Dendritic cell treated with granulocyte-macrophage colony-stimulating factor and Interleukin-4, amounts not matched to agents 40 ng/mL and 50 ng/mL, for 4 days (primary cell): ENCODE measurements at regions of chr4 and their contacts with region 1.

Region 1: DNA sequence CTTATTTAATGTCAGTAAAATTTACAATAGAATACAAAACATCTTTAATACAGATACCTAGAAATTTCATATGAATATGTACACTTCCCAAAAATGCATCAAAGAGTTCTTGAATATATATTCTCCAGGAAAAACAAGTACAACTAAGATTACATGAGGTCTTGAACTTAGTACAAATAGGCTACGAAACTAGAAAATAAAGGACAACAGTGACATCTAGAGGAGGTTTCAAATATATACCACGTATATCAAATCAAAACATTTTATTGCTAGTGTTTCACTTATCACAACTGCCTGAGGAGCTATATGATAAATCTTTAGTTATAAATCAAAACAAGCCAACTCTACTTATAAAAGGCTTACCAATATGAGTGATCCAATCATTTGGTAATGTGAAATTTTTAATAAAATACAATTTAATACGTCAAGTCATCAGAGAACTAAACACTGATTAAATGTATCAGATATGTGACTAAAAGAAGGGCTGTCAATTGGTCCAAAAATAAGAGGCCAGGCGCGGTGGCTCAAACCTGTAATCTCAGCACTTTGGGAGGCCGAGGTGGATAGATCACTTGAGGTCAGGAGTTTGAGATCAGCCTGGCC is 36.6 kb downstream of the ANAPC10 start:
- H3K4me3 Mint-ChIP-seq: no peak overlapping the region
- H3K27ac Mint-ChIP-seq: no peak overlapping the region
- H3K4me1 Mint-ChIP-seq: peaks cover 7% of the 10 kb centered on the region
- H3K27me3 Mint-ChIP-seq: no peaks in the 10 kb centered on the region

Region 2: GRCh38 chr4:144174401-144175067 is 886.9 kb before region 1 on chr4:
- intact Hi-C with region 1: loop called (anchors 1 kb)
- H3K4me3 Mint-ChIP-seq: no peak overlapping the region
- H3K27ac Mint-ChIP-seq: no peak overlapping the region
- H3K4me1 Mint-ChIP-seq: no peaks in the 10 kb centered on the region
- H3K27me3 Mint-ChIP-seq: no peaks in the 10 kb centered on the region

Region 3: DNA sequence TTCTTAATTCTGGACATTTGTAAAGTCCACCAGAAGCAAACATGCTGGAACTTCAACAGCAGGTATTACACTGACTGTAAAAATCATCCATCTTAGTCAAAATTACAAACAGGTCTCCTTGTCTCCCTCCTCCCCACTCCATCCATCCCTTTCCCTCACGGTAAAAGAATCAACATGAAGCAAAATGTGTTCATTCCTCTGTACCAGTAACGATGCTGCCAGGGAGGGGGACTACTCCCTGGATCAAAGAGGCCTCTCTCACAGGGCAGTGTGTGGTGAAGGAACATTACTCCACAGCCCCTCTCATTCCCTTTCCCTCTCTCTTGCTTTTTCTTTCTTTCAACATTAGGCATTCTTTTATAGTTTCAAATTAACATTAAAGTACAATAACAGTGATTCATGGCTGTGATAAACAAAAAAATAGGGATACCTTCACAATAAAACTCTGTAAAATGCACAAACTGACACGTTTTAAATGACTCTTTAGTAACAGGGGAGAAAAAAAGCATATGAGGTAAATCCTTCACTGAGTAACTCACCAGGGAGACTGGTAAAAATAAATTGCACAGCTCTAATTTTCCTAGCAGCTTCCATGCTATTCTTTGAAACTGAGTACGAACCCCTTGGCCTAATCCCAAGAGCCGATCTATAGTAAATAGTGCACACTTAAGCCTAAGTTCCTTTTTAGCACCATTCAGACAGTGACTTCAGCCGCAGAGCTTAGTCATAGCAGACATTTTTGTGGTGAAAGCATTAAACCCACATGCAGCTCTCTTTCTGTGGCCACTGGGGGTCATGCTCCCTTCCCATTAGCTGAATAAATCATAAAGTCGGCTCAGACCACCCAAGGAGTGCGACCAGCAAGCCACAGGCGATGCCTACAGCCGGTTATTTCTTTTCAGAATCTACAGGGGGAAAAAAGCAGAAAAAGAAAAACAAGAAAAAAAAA is 705.3 kb before region 1 on chr4:
- intact Hi-C with region 1: loop called (anchors 10 kb)
- H3K4me3 Mint-ChIP-seq: no peak overlapping the region
- H3K27ac Mint-ChIP-seq: no peak overlapping the region
- H3K4me1 Mint-ChIP-seq: peaks cover 17% of the 10 kb centered on the region
- H3K27me3 Mint-ChIP-seq: peaks cover 19% of the 10 kb centered on the region

Region 4: GRCh38 chr4:144787365-144788258 is 273.8 kb before region 1 on chr4:
- intact Hi-C with region 1: loop called (anchors 5 kb)
- H3K4me3 Mint-ChIP-seq: no peak overlapping the region
- H3K27ac Mint-ChIP-seq: no peak overlapping the region
- H3K4me1 Mint-ChIP-seq: no peaks in the 10 kb centered on the region
- H3K27me3 Mint-ChIP-seq: no peaks in the 10 kb centered on the region

Region 5: DNA sequence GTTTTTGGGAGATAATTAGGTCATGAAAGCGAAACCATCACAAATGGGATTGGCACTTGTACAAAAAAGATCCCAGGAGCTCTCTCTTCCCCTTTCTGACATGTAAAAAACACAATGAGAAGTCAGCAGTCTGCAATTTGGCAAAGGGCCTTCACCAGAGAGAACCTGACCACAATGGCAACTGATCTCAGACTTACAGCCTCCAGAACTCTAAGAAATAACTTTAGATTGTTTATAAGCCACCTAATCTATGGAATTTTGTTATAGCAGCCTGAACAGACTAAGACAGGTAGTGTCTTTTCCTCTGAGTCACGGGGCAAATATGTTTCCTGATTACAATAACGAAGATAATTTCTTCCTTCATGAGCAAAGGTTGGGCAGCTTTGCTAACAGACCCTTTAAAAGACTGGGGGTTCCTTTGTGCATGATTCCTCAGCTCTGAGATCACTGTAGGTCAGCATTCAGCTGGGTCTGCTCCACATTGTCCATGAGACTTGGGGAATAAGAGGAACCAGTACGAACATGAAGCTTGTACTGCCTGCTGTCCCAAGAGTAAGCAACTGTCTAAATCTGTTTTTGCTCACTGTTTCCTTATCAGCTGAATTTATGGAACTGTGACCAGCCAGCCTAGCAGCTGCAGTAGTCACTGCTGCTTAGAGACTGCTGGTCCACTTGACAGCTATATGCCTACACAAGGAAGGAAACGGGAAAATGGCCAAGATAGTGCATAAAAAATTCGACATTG is 155.1 kb before region 1 on chr4:
- intact Hi-C with region 1: loop called (anchors 10 kb)
- H3K4me3 Mint-ChIP-seq: no peak overlapping the region
- H3K27ac Mint-ChIP-seq: peak overlapping the region; percentile 60
- H3K4me1 Mint-ChIP-seq: peaks cover 32% of the 10 kb centered on the region
- H3K27me3 Mint-ChIP-seq: no peaks in the 10 kb centered on the region

Region 6: GRCh38 chr4:145501051-145501660 is 439.7 kb after region 1 on chr4:
- intact Hi-C with region 1: no loop called
- H3K4me3 Mint-ChIP-seq: no peak overlapping the region
- H3K27ac Mint-ChIP-seq: no peak overlapping the region
- H3K4me1 Mint-ChIP-seq: peaks cover 12% of the 10 kb centered on the region
- H3K27me3 Mint-ChIP-seq: no peaks in the 10 kb centered on the region

Region 7: DNA sequence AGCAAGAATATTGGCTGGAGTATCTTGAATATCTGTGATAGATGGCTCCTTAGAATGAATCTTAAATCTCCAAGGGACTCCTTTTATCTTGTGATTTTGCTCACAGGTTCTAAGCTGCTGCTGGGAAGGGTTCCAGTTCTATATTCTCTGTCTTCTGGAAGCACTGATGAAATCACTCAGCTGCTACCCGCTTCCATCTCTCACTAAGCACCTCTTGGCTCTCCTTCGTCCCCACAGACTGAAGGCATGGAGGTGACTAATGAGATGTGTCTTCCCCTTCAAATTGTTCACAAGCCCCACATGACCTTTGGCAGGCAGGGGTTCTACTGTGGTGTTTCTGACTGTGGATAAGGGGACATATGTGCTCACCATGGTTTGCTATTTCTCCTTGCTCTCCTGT is 694.4 kb after region 1 on chr4:
- intact Hi-C with region 1: no loop called
- H3K4me3 Mint-ChIP-seq: no peak overlapping the region
- H3K27ac Mint-ChIP-seq: peak overlapping the region; percentile 37
- H3K4me1 Mint-ChIP-seq: peaks cover 15% of the 10 kb centered on the region
- H3K27me3 Mint-ChIP-seq: no peaks in the 10 kb centered on the region